SK-N-SH (cell line): ENCODE measurements at regions of chr6 and their contacts with region 1.

Region 1: GRCh38 chr6:75266716-75267291 is 17.8 kb downstream of the TMEM30A start:
- DNase-seq: peak; percentile 40
- H3K4me3 ChIP-seq: no peak overlapping the region; a peak in 1 of 4 replicates
- H3K27ac ChIP-seq: no peak overlapping the region
- H3K4me1 ChIP-seq: no peaks in the 10 kb centered on the region; a peak in 1 of 4 replicates
- H3K27me3 ChIP-seq: no peaks in the 10 kb centered on the region
- CTCF ChIP-seq: peak; percentile 95
- EP300 ChIP-seq: no peak
- RAD21 ChIP-seq: peak; percentile 79

Region 2: DNA sequence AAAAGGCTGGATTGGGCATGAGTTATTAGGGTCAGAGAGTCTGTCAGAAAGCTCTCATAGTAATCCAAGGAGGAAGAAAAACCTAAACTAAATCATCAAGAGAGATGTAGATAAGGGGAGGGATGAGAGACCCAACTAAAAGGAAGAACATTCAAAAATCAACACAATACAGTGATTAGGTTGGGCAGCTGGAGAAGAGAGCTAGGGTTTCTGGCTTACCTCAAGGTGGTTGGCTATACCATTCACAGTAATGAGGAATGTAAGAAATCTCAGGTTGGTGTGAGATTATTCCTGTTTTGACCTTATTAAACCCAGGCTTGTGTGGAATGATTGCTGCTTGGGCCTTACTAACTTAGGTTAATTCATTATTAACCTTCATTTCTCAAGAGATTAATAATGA is 17.0 kb before region 1 on chr6:
- CTCF ChIA-PET with region 1: interaction called, 35 read pairs
- POLR2A ChIA-PET with region 1: no interaction called
- DNase-seq: no peak
- H3K4me3 ChIP-seq: no peak overlapping the region
- H3K27ac ChIP-seq: no peak overlapping the region
- H3K4me1 ChIP-seq: no peaks in the 10 kb centered on the region; a peak in 1 of 4 replicates
- H3K27me3 ChIP-seq: no peaks in the 10 kb centered on the region
- CTCF ChIP-seq: no peak
- EP300 ChIP-seq: no peak
- RAD21 ChIP-seq: no peak

Region 3: DNA sequence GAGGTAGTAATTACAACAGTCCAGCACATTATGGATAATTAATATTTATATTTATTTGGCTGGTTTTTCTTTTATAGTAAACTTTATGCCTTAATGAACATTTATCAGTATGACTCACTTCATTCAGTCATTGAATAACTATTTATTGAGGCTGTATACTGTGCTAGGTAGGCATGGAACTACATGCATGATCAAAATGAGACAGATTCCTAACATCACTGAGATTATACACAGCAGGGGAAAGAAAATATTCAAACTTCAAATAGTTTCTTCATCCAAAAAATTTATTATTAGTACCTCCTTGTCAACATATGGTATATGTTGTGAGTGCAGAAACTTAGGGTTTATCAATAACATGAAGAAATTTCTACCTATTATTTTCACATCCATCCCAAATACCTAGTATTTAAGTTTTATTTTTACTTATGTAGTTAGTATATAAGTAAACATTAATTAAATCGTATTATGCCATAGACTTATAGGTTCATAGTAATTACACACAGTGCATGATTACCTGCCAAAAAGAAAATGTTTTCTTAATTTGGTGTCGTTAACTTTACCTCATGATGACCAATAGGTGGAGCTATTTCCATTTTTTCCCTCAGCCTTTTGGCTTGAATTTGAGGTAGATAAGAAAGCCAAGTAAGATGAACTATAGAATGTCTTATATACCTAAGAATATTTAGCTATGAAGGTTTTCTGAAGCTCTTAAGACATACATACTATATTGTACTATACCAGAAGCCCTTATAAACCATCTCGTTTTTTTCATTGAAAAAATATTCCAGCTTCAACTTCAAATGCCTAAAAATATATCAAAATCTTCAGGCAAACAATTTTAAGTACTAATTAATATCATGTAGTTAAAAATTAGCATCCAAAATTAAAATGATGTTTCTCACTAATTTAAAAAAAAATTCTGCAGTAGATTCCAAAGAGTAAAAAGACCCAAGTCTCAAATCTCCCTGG is 30.3 kb after region 1 on chr6:
- CTCF ChIA-PET with region 1: interaction called, 13 read pairs
- POLR2A ChIA-PET with region 1: no interaction called
- DNase-seq: peak; percentile 33
- H3K4me3 ChIP-seq: no peak overlapping the region; a peak in 1 of 4 replicates
- H3K27ac ChIP-seq: no peak overlapping the region
- H3K4me1 ChIP-seq: peaks cover 0 to 2% of the 10 kb centered on the region in 2 experiments; a peak in 2 of 4 replicates
- H3K27me3 ChIP-seq: no peaks in the 10 kb centered on the region
- CTCF ChIP-seq: peak; percentile 84
- EP300 ChIP-seq: no peak
- RAD21 ChIP-seq: peak; percentile 89